Transverse colon (tissue), 4 donors: ENCODE measurements at regions of chr1 and their contacts with region 1.

Region 1: DNA sequence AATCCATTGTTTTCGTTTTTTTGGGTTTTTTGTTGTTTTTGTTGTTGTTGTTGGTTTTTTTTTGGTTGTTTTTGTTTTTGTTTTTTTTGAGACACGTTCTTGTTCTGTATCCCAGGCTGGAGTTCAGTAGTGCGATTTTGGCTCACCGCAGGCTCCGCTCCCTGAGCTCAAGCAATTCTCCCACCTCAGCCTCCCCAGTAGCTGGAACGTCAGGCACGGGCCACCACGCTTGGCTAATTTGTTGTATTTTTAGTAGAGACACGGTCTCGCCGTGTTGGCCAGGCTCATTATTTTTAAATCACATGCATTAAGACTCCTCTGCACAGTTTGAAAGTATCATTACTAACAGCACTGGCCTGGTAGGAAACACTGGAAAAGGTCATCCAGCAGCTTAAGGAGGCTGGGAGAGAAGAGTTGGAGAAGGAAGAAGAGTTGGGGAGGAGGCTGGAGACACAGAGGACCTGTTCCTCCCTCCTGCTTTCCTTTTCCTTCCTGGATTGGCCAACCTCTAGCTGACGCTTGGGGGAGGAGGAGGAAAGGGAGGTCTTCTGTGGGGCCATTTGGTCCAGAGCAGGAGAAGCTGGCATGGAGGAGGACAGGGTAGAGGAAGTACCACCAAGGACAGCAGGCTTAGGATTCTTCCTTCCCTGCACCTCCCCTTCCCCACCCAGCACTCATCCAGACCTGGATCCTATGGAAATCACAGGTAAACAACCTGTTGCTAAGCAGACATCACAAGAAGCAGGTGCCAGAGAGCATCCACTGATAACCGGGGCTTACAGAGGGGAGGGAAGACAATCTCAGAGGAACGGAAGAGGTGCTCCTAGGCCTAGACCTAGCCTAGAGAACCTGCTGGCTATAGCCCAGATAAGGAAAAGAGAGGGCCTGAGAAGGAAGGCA is 71.9 kb upstream of the GOLT1A start:
- DNase-seq: no peak
- H3K4me3 ChIP-seq: no peak overlapping the region
- H3K27ac ChIP-seq: peak overlapping the region in 2 of 4 donors; percentile 18 to 55
- H3K4me1 ChIP-seq: peaks cover 7 to 43% (median 17%) of the 10 kb centered on the region in 4 donors
- H3K27me3 ChIP-seq: no peaks in the 10 kb centered on the region
- CTCF ChIP-seq: no peak
- EP300 ChIP-seq: no peak
- POLR2A ChIP-seq: no peak

Region 2: DNA sequence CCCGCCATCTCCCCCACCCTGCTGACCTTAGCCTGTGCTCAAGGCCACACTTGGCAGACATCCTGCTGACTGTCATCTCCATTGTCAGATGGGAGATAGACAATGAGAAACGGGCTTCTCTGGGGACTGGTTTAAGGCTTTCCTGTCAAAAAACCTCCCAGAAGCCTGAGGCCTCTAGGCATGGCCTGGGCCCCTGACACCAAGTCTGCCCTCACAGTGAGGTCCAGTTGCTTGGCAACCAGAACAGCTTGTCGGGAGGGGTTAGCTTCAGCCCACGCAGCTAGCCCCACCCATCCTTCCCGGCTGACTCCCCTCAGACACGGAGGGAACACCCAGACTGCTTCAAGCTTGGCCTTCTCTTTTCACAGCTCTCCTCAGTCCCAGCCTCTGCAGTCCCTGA is 63.1 kb after region 1 on chr1:
- in situ Hi-C with region 1: no loop called
- intact Hi-C with region 1: loop called (anchors 2 kb)
- DNase-seq: peak; percentile 77
- H3K4me3 ChIP-seq: peak overlapping the region in 1 of 4 donors; percentile 3
- H3K27ac ChIP-seq: peak overlapping the region; percentile 81 to 86 (median 84)
- H3K4me1 ChIP-seq: peaks cover 35 to 72% (median 49%) of the 10 kb centered on the region in 4 donors
- H3K27me3 ChIP-seq: no peaks in the 10 kb centered on the region
- CTCF ChIP-seq: no peak
- EP300 ChIP-seq: no peak
- POLR2A ChIP-seq: no peak